Activated CD4-positive, alpha-beta memory T cell treated with anti-CD3 and anti-CD28 coated beads, Interleukin-2, amount 10 ng/mL, durations not matched to agents 7 days and 5 days (primary cell): ENCODE measurements at regions of chr6 and their contacts with region 1.

Region 1: GRCh38 chr6:149094156-149094555 is 223.4 kb upstream of the TAB2 start:
- DNase-seq: peak; percentile 48
- H3K4me3 Mint-ChIP-seq: peak overlapping the region; percentile 71
- H3K27ac Mint-ChIP-seq: peak overlapping the region; percentile 97
- H3K4me1 Mint-ChIP-seq: peaks cover 80% of the 10 kb centered on the region
- H3K27me3 Mint-ChIP-seq: no peaks in the 10 kb centered on the region

Region 2: GRCh38 chr6:149082286-149082707 is 11.9 kb before region 1 on chr6:
- CTCF ChIA-PET with region 1: interaction called, 30 read pairs
- POLR2A ChIA-PET with region 1: interaction called, 153 read pairs
- DNase-seq: peak; percentile 91
- H3K4me3 Mint-ChIP-seq: peak overlapping the region; percentile 50
- H3K27ac Mint-ChIP-seq: peak overlapping the region; percentile 96
- H3K4me1 Mint-ChIP-seq: peaks cover 87% of the 10 kb centered on the region
- H3K27me3 Mint-ChIP-seq: no peaks in the 10 kb centered on the region

Region 3: DNA sequence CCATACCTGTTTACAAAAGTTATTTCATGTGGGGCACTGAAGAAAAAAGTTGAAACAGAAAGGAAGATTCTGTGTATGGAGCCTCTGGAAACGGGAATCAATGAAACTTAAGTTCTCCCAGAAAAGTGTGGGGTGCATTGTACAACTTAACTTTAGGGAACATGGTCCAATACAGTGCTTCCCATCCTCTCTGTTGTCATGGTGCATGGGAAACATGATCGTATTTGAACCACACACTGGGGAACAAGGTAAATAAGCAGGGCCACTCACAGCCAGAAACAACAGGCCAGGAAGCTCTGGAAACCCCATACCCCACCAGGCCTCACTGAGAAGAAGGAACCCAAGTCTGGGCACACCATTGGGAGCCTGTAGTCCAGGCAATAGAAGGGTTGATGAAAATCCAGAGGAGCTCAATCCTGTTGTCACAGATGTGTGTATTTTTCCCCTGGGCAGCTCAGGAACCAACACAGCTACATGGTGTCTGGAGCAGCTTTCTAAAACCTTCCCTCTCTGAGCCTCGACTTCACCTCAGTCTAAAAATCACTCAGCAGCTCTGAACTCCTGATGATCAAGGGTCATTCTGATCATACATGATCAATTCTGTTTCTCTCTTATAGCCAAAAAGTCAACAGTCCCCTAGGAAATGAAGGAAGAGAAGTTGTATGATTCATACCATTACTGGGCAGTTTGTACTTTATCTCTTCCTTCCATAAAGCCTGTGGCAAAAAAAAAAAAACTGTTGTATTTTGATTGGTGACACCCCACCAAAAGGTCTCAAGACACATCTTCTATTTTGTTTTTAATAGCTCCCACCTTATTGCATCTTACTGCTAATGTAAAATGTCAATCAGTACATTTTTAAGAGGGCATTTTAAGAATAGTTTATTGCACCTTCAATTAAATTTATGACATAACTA is 24.8 kb after region 1 on chr6:
- CTCF ChIA-PET with region 1: interaction called, 4 read pairs
- POLR2A ChIA-PET with region 1: interaction called, 26 read pairs
- DNase-seq: no peak
- H3K4me3 Mint-ChIP-seq: no peak overlapping the region
- H3K27ac Mint-ChIP-seq: peak overlapping the region; percentile 42
- H3K4me1 Mint-ChIP-seq: peaks cover 59% of the 10 kb centered on the region
- H3K27me3 Mint-ChIP-seq: no peaks in the 10 kb centered on the region

Region 4: GRCh38 chr6:149140137-149140909 is 46.2 kb after region 1 on chr6:
- CTCF ChIA-PET with region 1: interaction called, 15 read pairs
- POLR2A ChIA-PET with region 1: interaction called, 93 read pairs
- DNase-seq: peak; percentile 88
- H3K4me3 Mint-ChIP-seq: peak overlapping the region; percentile 77
- H3K27ac Mint-ChIP-seq: peak overlapping the region; percentile 96
- H3K4me1 Mint-ChIP-seq: peaks cover 63% of the 10 kb centered on the region
- H3K27me3 Mint-ChIP-seq: no peaks in the 10 kb centered on the region

Region 5: GRCh38 chr6:149235130-149235561 is 141.0 kb after region 1 on chr6:
- CTCF ChIA-PET with region 1: interaction called, 3 read pairs
- POLR2A ChIA-PET with region 1: interaction called, 10 read pairs
- DNase-seq: no peak
- H3K4me3 Mint-ChIP-seq: no peak overlapping the region
- H3K27ac Mint-ChIP-seq: peak overlapping the region; percentile 93
- H3K4me1 Mint-ChIP-seq: peaks cover 51% of the 10 kb centered on the region
- H3K27me3 Mint-ChIP-seq: no peaks in the 10 kb centered on the region

Region 6: GRCh38 chr6:149324428-149324827 is 230.3 kb after region 1 on chr6:
- CTCF ChIA-PET with region 1: interaction called, 11 read pairs
- POLR2A ChIA-PET with region 1: interaction called, 235 read pairs
- DNase-seq: peak; percentile 38
- H3K4me3 Mint-ChIP-seq: peak overlapping the region; percentile 53
- H3K27ac Mint-ChIP-seq: peak overlapping the region; percentile 64
- H3K4me1 Mint-ChIP-seq: peaks cover 76% of the 10 kb centered on the region
- H3K27me3 Mint-ChIP-seq: no peaks in the 10 kb centered on the region

Region 7: GRCh38 chr6:149354009-149354408 is 259.9 kb after region 1 on chr6:
- CTCF ChIA-PET with region 1: no interaction called
- POLR2A ChIA-PET with region 1: no interaction called
- DNase-seq: no peak
- H3K4me3 Mint-ChIP-seq: no peak overlapping the region
- H3K27ac Mint-ChIP-seq: no peak overlapping the region
- H3K4me1 Mint-ChIP-seq: peaks cover 74% of the 10 kb centered on the region
- H3K27me3 Mint-ChIP-seq: no peaks in the 10 kb centered on the region